Ascending aorta (tissue), 2 donors: ENCODE measurements at regions of chr3 and their contacts with region 1.

Region 1: GRCh38 chr3:40179016-40179415 is 130.5 kb upstream of the EIF1B start:
- DNase-seq: peak in 1 of 2 donors; percentile 73
- H3K4me3 ChIP-seq: no peak overlapping the region
- H3K27ac ChIP-seq: no peak overlapping the region
- H3K4me1 ChIP-seq: peaks cover 0 to 3% of the 10 kb centered on the region in 2 donors
- H3K27me3 ChIP-seq: no peaks in the 10 kb centered on the region
- CTCF ChIP-seq: peak; percentile 57 to 86 (median 63)

Region 2: DNA sequence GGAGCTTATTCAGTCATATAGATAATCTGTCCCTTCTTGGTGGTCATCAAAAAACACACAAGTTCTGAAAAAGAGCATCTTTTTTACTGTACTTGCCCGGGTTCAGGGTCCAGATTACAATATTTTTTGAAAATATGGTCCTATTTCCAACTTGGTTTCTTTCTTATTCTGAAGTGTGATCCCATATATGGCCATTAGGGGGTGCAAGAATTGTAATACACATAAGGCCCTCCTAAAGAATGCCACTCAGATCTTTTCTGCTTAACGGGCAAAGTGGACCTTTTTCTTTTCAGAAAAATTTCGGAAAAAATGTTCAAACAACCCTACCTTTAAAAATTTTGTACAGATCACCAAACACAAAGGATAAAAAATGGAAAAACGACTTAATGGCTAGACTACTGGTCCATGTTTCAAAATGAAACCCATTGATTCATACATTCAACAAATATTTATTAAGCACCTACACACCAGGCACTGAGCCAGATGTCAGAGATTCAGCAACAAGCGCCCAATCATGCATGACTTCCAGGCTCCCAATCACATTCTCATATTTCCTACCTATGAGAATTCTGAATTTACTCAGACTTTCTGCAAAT is 471.6 kb before region 1 on chr3:
- intact Hi-C with region 1: loop called (anchors 1 kb)
- DNase-seq: no peak
- H3K4me3 ChIP-seq: no peak overlapping the region
- H3K27ac ChIP-seq: no peak overlapping the region
- H3K4me1 ChIP-seq: no peaks in the 10 kb centered on the region
- H3K27me3 ChIP-seq: no peaks in the 10 kb centered on the region
- CTCF ChIP-seq: peak; percentile 32 to 67 (median 53)

Region 3: DNA sequence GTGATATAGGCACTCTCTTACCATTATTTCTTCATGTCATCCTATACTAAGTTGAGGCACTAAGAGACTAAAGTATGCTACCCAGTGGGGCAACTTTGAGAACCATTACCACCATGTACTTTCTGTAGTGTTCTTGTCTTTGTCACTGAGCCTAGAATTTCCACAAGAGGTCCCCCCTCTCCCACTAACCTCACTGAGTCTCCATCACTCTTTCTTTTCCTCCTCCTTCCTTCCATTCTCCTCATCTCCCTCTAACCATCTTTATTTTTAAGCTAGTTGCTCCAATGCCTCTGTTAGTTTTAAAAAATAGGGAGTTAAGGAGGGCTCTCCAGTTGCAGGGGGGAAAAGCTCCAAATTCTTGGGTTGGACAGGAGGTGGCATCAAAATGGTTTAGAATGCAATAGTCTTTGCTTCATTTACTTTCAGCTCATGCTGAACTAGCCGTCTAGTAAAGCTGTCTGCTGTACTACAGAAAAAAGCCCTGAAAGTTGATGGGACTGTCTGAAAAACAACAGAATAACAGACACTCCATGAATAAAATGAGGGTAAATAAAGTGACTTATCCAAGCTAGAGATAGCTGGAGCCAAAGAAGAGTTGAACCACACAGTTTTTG is 454.7 kb before region 1 on chr3:
- intact Hi-C with region 1: loop called (anchors 2 kb)
- DNase-seq: no peak
- H3K4me3 ChIP-seq: no peak overlapping the region
- H3K27ac ChIP-seq: no peak overlapping the region
- H3K4me1 ChIP-seq: no peaks in the 10 kb centered on the region
- H3K27me3 ChIP-seq: no peaks in the 10 kb centered on the region
- CTCF ChIP-seq: peak in 1 of 3 experiments; percentile 36